ENCODE measurements at regions of chr12 and their contacts with region 1.

Region 1: DNA sequence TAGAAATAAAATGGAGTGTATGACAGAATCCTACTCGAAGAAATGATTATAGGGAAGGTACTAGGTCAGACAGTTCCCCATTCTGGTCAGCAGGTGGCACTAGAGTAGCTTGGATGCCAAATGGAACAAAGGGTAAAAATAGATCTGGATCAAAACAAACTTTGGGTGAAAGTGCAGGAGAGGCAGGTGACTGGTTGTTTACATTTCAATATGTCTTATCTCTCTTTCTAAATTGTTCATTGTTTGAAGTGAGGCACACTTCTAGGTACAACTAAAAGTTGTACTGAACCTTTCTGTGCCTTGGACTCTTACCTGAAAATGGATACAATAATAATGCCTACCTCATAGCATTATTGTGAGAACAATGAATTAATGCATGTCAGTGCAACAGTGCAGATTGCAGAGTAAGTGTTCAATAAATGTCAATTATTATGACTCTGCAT is 62.0 kb upstream of the OSBPL8 start:
- DNase-seq: peak; percentile 83
- H3K4me3 ChIP-seq: no peak overlapping the region
- H3K27ac ChIP-seq: no peak overlapping the region
- H3K4me1 ChIP-seq: no peaks in the 10 kb centered on the region
- H3K27me3 ChIP-seq: no peaks in the 10 kb centered on the region
- CTCF ChIP-seq: peak; percentile 93

Region 2: GRCh38 chr12:76784600-76785051 is 163.0 kb after region 1 on chr12:
- intact Hi-C with region 1: loop called (anchors 5 kb)
- DNase-seq: no peak
- H3K4me3 ChIP-seq: no peak overlapping the region
- H3K27ac ChIP-seq: no peak overlapping the region
- H3K4me1 ChIP-seq: no peaks in the 10 kb centered on the region
- H3K27me3 ChIP-seq: no peaks in the 10 kb centered on the region
- CTCF ChIP-seq: no peak

Region 3: DNA sequence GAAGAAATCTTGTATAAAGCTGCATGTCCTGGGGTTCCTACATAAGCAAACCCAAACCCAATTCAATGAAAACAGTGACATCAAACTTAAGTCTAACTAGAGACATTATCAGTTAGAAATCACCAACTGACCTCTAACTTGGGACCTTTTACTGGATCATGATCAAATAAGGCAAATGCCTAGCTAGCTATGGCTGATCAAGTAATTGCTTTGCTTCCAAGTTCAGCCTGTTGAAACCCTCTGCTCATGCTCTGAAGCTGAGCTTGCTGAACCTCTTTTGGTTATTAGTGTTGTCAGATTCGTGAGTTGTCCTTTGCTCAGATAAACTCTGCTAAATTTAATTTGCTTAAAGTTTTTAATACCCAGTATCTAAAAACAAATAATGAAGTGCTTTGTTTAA is 171.2 kb after region 1 on chr12:
- intact Hi-C with region 1: loop called (anchors 2 kb)
- DNase-seq: no peak
- H3K4me3 ChIP-seq: no peak overlapping the region
- H3K27ac ChIP-seq: no peak overlapping the region
- H3K4me1 ChIP-seq: no peaks in the 10 kb centered on the region
- H3K27me3 ChIP-seq: no peaks in the 10 kb centered on the region
- CTCF ChIP-seq: no peak

Region 4: DNA sequence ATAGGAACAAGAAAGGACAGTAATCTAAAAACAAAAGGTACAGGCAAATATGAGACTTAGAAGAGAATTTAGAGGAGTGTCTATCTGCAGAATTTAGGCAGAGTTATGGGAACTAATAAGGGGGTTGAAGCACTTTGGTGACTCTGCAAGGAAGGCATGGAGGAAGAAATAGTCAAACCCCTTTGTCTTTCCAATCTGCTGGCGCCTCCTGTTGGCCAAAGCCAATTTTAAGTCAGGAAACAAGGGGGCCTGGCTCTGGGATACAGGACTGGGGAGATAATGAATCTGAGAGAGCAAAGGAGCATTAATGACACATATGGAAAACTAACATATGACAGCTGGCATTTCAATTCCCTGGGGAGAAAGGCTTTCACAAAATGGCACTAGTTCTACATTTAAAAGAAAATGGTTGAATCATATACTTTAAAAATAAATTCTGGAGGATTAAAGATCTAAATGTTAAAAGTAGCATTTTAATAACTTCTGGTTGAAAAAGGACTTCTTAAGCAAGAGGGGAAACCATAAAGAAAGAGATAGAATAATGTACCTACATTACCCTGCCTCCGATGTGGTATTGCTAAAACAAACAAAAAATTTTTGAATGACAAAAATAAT is 305.7 kb after region 1 on chr12:
- intact Hi-C with region 1: loop called (anchors 5 kb)
- DNase-seq: peak; percentile 50
- H3K4me3 ChIP-seq: no peak overlapping the region
- H3K27ac ChIP-seq: no peak overlapping the region
- H3K4me1 ChIP-seq: no peaks in the 10 kb centered on the region
- H3K27me3 ChIP-seq: no peaks in the 10 kb centered on the region
- CTCF ChIP-seq: peak; percentile 22

Region 5: GRCh38 chr12:77010691-77011548 is 389.3 kb after region 1 on chr12:
- intact Hi-C with region 1: loop called (anchors 5 kb)
- DNase-seq: peak; percentile 77
- H3K4me3 ChIP-seq: no peak overlapping the region
- H3K27ac ChIP-seq: no peak overlapping the region
- H3K4me1 ChIP-seq: no peaks in the 10 kb centered on the region
- H3K27me3 ChIP-seq: no peaks in the 10 kb centered on the region
- CTCF ChIP-seq: peak; percentile 96